ENCODE measurements at regions of chr2 and their contacts with region 1.

Region 1: GRCh38 chr2:28359222-28360065 is 33.2 kb upstream of the FOSL2 start:
- DNase-seq: peak; percentile 76 to 93
- H3K4me3 ChIP-seq: no peak overlapping the region
- H3K27ac ChIP-seq: peak overlapping the region; percentile 72
- H3K4me1 ChIP-seq: peaks cover 38% of the 10 kb centered on the region
- H3K27me3 ChIP-seq: no peaks in the 10 kb centered on the region
- CTCF ChIP-seq: no peak

Region 2: DNA sequence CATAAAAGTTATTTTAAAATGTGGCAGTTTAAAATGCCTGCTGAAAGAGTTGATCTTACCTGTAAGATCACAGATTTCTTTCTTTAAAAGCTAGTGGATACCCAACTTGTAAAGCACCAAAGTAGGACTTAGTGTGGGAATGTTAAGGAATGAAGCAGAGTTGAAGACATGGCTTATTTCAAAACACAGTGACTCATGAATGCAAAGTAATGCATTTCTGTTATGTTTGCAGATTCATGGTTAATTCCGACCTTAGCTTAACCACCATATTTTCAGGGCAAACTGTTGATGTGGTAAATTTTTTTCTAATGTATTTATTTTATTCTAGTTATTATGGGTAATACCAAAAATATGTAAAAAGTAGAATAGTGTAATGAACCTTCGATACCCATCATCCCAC is 173.6 kb before region 1 on chr2:
- CTCF ChIA-PET with region 1: no interaction called
- POLR2A ChIA-PET with region 1: interaction called, 15 read pairs
- intact Hi-C with region 1: no loop called
- DNase-seq: peak in 1 of 2 experiments; percentile 68
- H3K4me3 ChIP-seq: no peak overlapping the region
- H3K27ac ChIP-seq: peak overlapping the region; percentile 39
- H3K4me1 ChIP-seq: peaks cover 16% of the 10 kb centered on the region
- H3K27me3 ChIP-seq: no peaks in the 10 kb centered on the region
- CTCF ChIP-seq: no peak

Region 3: GRCh38 chr2:28300485-28301341 is 58.7 kb before region 1 on chr2:
- CTCF ChIA-PET with region 1: no interaction called
- POLR2A ChIA-PET with region 1: no interaction called
- intact Hi-C with region 1: no loop called
- DNase-seq: no peak
- H3K4me3 ChIP-seq: no peak overlapping the region
- H3K27ac ChIP-seq: no peak overlapping the region
- H3K4me1 ChIP-seq: peaks cover 19% of the 10 kb centered on the region
- H3K27me3 ChIP-seq: no peaks in the 10 kb centered on the region
- CTCF ChIP-seq: no peak

Region 4: GRCh38 chr2:29923110-29923721 is 1563.8 kb after region 1 on chr2:
- CTCF ChIA-PET with region 1: no interaction called
- POLR2A ChIA-PET with region 1: no interaction called
- intact Hi-C with region 1: no loop called
- DNase-seq: peak; percentile 26 to 53
- H3K4me3 ChIP-seq: no peak overlapping the region
- H3K27ac ChIP-seq: no peak overlapping the region
- H3K4me1 ChIP-seq: no peaks in the 10 kb centered on the region
- H3K27me3 ChIP-seq: peaks cover 19% of the 10 kb centered on the region
- CTCF ChIP-seq: peak; percentile 96

Measured in PC-9 (cell line).